ENCODE measurements at regions of chr10 and their contacts with region 1.

Region 1: DNA sequence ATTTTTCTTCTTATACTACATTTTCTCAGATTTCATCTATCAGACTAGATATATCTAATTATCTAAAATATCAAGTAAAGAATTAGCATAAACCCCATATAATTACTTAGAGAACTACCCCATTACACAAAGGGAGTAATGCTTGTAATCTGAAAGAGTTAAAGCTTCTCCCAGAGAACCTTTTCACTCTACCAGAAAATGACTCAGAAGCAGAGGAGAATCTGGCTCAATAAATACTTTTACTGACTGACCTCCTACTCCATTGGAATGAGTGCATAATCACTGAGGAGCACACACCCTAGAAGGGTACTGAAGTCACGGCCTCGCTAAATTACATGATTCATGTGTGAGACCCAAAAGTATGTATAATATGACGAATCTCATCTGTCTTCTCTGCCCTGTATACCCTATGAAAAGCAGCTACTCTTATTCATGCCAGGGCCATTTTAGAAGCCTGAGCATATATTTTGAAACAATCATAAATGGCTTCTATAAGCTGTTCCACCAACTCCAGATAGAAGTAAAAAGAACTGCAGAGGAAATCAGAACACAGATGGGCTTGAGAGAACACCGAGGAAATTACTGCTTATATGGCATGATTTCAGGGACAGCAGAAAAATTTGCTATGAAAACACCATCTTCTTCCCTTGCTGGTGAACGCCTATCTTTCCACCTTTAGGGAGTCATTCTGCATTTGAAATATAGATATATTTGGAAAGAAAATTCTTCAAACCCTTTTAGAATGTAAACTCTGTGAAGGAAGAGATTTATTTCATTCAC is 32.7 kb downstream of the DNMBP start:
- DNase-seq: peak; percentile 78
- H3K4me3 ChIP-seq: peak overlapping the region; percentile 14; the same call in 1 of the 2 replicates
- H3K27ac ChIP-seq: peak overlapping the region; percentile 79
- H3K27me3 ChIP-seq: no peaks in the 10 kb centered on the region
- CTCF ChIP-seq: no peak

Region 2: DNA sequence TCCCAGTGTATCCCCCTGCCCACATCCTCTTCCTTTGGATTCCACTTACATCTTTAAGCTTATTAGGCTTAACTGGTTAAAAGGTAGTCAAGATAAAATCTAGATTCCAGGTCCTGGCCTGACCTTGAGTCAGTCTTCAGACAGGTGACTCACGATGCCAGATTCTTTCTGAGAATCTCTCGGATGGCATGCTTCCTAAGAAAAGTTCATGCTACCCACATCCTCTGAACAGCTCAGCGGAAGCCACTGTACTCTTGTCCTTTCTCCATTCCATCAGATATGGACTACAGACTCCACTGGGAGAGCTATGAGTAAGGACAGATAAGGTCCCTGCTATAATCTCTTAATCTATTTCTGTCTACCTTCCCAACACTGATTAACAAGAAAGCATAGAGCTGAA is 10.8 kb before region 1 on chr10:
- CTCF ChIA-PET with region 1: interaction called, 16 read pairs
- POLR2A ChIA-PET with region 1: no interaction called
- DNase-seq: no peak
- H3K4me3 ChIP-seq: no peak overlapping the region
- H3K27ac ChIP-seq: no peak overlapping the region
- H3K27me3 ChIP-seq: no peaks in the 10 kb centered on the region
- CTCF ChIP-seq: no peak

Measured in AG04450 (cell line).